ENCODE measurements at regions of chr9 and their contacts with region 1.

Region 1: GRCh38 chr9:70398145-70398556 is 16.3 kb downstream of the KLF9 start:
- DNase-seq: peak in 1 of 4 donors; percentile 47
- ATAC-seq: peak; percentile 43
- H3K4me3 ChIP-seq: no peak overlapping the region
- H3K27ac ChIP-seq: peak overlapping the region in 3 of 4 donors; percentile 17 to 26 (median 19)
- H3K4me1 ChIP-seq: peaks cover 82% of the 10 kb centered on the region
- H3K27me3 ChIP-seq: no peaks in the 10 kb centered on the region
- CTCF ChIP-seq: no peak
- POLR2A ChIP-seq: no peak

Region 2: DNA sequence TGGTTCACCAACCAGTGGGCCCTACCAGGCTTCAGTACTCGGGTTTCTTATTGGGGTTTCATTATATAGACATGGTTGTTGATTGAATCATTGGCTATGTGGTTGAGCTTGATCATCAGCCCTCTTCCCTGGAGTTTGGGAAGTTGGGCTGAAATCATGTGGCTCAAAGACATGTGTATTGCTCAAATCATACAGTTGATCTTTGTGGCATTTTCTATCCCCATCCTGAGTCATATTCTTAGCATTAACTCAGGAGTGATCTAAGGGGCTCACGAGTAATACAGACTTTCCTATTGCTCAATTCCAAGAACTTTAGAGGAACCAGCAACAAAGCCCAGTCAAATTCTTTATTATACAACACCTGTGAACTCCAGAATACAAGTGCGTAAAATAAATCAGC is 73.2 kb before region 1 on chr9:
- intact Hi-C with region 1: loop called (anchors 10 kb)
- DNase-seq: no peak
- ATAC-seq: no peak
- H3K4me3 ChIP-seq: no peak overlapping the region
- H3K27ac ChIP-seq: no peak overlapping the region
- H3K4me1 ChIP-seq: no peaks in the 10 kb centered on the region
- H3K27me3 ChIP-seq: no peaks in the 10 kb centered on the region
- CTCF ChIP-seq: no peak
- POLR2A ChIP-seq: no peak

Region 3: GRCh38 chr9:70551396-70551795 is 153.2 kb after region 1 on chr9:
- intact Hi-C with region 1: no loop called
- DNase-seq: no peak
- ATAC-seq: no peak
- H3K4me3 ChIP-seq: no peak overlapping the region
- H3K27ac ChIP-seq: no peak overlapping the region
- H3K4me1 ChIP-seq: peaks cover 6% of the 10 kb centered on the region
- H3K27me3 ChIP-seq: no peaks in the 10 kb centered on the region
- CTCF ChIP-seq: no peak
- POLR2A ChIP-seq: no peak

Region 4: DNA sequence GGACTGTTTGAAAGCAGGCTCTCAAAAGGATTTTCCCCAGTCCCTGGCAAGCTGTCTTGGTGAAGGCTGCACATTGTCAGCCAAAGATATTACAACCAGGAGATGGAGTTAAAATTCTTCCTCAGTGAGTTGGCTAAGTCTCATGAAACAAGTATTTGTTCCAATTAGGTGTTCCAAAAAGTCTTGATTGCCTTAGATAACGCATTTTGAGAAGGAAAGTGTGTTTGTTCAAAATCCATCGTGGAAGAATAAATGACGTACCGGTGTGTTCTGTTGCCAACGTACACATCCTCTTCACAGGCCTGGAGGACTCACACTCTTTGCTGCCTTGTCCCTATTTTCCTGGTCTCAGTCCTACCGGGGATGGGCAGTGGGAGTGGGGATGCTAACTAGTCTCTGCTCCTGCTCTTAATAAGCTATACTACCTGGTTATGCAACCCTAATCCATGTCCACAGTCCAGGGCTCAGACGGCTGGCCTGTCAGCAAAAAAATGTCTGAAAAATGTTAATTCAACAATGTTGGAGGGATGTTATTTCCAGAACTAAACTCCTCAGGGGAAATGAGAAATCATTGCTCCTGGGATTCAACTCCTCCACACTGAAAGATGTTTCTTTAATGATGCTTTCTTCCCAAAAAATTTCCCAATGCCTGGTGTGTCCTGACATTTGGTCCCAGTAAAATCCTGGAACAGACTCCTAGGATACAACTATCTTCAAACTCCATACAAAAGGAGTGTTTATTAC is 191.6 kb after region 1 on chr9:
- intact Hi-C with region 1: loop called (anchors 10 kb)
- DNase-seq: peak in 2 of 4 donors; percentile 12 to 32
- ATAC-seq: peak; percentile 61
- H3K4me3 ChIP-seq: no peak overlapping the region
- H3K27ac ChIP-seq: peak overlapping the region; percentile 0 to 36 (median 27)
- H3K4me1 ChIP-seq: no peaks in the 10 kb centered on the region
- H3K27me3 ChIP-seq: no peaks in the 10 kb centered on the region
- CTCF ChIP-seq: no peak
- POLR2A ChIP-seq: no peak